HEK293T (cell line): ENCODE measurements at regions of chr11 and their contacts with region 1.

Region 1: GRCh38 chr11:66616379-66617154 is at the start of gene RBM14:
- DNase-seq: peak; percentile 98

Region 2: DNA sequence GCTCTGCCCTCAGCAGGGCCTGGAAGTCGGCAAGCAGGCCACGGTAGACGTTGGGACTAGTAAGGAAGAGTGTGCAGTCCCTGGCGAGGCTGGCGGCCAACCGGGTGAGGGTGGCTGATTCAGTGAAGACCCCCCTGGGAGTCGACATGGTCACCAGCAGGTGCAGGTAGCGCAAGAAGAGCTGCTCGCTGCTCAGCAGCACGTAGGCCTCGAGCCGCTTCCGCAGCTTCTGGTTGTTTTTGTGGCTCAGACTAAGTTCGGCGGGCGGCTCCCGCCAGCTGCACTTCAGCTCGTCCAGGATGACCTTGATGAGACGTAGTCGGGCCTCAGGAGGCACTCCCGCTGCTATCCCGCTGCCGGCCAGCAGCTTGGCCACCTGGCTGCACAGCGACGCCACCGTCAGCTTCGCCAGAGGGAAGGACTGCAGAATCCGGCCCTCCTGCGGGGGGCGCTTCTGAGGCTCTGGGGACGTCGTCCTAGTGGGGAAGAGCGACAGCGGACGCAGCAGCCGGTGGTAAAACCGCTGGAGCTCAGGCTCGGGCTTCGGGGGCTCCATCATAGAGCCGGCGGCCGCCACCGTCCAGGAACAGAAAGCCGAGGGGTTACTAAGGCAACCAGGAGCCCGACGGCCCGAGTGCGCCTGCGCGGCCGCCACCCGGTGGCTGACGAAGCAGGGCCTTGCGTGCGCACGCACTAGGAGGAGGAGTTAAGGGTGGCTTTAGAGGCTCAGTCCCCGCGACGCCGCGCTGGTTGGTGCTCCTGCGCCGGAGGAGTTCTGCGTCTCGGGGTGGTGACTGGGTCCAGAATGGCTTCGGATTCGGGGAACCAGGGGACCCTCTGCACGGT is 23.9 kb before region 1 on chr11 and contains the starts of genes CCDC87 and CCS:
- CTCF ChIA-PET with region 1: interaction called, 5 read pairs
- POLR2A ChIA-PET with region 1: interaction called, 61 read pairs
- DNase-seq: peak; percentile 100

Region 3: DNA sequence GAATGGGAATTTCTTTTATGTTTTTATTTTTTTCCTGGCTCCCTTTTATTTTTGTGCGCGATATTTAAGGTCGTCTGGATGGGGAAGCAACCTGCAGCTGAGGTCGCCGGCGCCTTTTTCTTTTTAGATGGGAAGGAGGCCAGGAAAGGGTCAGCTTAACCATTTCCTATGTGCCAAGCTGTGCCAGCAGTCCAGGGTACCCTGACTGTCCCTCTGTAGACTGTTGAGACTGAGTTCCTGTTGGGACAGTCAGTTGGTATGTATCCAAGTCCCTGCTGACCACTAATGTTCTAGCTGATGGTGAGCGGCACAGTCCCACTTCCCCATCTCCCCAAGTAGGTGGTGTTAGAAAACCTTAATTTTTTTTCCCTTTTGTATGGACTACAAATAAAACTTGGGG is 10.4 kb after region 1 on chr11:
- CTCF ChIA-PET with region 1: no interaction called
- POLR2A ChIA-PET with region 1: interaction called, 39 read pairs
- DNase-seq: no peak

Region 4: DNA sequence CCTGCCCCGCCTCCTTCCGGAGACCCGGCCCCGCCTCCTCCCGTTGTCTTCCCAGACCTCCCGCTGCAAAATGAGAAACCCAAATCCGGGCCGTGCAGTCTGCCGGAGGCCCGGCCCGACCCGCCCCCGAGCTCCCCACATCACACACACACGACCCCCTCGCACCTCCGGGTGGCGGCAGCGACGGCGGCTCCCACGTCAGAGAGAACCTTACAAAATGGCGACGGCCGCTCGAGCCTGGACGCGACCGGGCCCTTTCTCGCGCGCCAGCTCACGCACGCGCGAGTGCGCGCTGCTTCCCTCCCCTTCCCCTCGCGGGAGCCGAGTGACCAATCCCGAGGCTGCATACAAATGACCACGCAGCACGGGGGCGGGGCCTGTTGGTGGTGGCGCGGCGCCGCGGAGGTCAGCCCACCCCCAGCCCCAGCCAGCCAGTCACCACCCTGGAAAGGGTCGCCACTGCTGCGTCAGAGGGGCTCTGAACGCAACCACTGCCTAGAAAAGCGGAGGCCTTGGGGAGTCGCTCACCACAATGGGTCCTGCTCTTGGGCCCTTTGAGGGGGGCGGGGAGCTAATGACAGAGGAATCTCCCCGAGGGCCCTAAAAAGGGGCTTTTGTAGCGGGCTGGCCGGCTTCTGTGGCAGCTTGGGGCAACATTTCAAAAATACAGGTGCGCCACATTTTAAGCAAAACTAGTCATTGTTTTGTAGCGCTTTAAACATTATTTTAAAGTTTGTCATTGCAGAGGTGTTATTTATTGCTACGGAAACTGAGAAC is 61.2 kb after region 1 on chr11 and contains the start of gene RBM4B:
- CTCF ChIA-PET with region 1: interaction called, 3 read pairs
- POLR2A ChIA-PET with region 1: interaction called, 18 read pairs
- DNase-seq: peak; percentile 94